Esophagus muscularis mucosa (tissue), 4 donors: ENCODE measurements at regions of chr6 and their contacts with region 1.

Region 1: DNA sequence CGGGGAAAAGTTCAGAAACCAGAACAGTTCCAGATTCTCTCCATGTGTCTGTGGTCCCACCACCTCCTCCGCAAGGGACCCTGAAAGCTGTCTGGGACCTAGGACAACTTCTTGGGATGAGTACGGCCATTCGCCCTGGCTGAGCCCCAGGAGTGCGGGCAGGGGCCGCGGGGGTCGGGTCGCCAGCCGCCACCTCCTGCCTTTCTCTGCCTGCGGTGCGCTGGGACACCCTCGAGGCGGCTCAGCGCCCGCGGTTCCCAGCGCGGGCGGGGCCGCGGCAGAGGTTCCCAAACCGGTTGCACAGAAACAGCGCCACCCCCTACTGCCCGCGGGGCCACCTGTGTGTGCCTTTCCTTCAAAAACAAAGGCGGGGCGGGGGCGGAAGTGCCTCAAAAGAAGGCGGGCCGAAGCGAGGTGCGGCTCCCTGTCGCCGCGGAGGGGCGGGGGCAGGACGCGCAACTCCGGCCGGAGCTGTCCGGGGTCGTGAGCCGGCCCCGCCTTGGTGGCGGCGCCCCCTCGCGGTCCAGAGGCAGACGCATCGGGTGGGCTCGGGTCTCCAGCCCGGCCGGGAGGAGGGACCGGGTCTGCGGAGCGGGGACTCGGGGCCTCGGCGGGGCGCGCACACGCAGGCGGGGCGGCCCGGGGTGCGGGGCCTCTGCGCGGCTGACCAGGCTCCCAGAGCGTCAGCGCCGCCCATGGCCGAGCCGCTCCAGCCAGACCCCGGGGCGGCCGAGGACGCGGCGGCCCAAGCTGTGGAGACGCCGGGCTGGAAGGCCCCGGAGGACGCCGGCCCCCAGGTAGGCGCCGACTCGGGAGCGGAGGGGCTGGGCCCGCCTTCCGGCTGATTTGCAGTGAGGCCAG is at the start of gene HEBP2:
- DNase-seq: peak; percentile 99
- H3K4me3 ChIP-seq: peak within 1 kb of the TSS; percentile 67 to 91 (median 84)
- H3K27ac ChIP-seq: peak within 1 kb of the TSS; percentile 91 to 98 (median 96)
- H3K4me1 ChIP-seq: peaks cover 12 to 33% (median 19%) of the 10 kb centered on the region in 4 donors
- H3K27me3 ChIP-seq: no peaks in the 10 kb centered on the region
- CTCF ChIP-seq: peak; percentile 56 to 63 (median 61)
- EP300 ChIP-seq: no peak
- POLR2A ChIP-seq: no peak
- total RNA-seq, gene HEBP2: 90.1 to 135 (median 104) TPM

Region 2: DNA sequence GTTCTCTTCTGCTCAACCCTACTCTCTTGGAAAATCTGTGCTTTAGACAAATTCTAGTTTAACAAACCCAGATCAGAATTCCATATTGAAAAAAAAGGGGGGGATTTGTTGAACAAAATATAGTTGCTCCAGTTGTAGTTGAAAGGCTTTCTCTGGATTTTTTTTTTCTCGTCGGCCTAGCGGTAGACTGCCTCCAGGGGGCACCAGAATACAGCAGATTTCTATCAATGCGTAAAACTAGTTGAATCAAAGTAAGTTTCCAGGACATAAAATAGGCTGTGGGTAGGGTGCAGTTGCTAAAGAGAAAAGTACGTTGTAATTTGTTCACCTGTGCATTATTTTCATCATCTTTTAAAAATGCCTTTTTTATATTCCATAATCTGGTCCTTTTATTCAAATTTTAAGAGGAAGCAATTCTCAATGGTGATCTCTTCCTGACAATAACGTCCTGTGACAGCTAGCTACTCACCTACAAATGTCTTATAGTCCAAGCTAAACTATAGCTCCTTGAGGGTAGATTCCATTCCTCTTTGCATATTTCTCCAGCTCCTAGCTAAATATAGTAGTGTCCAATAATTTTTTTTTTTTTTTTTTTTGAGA is 402.2 kb before region 1 on chr6:
- intact Hi-C with region 1: loop called (anchors 10 kb)
- DNase-seq: no peak
- H3K4me3 ChIP-seq: no peak overlapping the region
- H3K27ac ChIP-seq: no peak overlapping the region
- H3K4me1 ChIP-seq: peaks cover 0 to 1% (median 0%) of the 10 kb centered on the region in 4 donors
- H3K27me3 ChIP-seq: no peaks in the 10 kb centered on the region
- CTCF ChIP-seq: peak; percentile 86 to 89 (median 87)
- EP300 ChIP-seq: no peak
- POLR2A ChIP-seq: no peak

Region 3: DNA sequence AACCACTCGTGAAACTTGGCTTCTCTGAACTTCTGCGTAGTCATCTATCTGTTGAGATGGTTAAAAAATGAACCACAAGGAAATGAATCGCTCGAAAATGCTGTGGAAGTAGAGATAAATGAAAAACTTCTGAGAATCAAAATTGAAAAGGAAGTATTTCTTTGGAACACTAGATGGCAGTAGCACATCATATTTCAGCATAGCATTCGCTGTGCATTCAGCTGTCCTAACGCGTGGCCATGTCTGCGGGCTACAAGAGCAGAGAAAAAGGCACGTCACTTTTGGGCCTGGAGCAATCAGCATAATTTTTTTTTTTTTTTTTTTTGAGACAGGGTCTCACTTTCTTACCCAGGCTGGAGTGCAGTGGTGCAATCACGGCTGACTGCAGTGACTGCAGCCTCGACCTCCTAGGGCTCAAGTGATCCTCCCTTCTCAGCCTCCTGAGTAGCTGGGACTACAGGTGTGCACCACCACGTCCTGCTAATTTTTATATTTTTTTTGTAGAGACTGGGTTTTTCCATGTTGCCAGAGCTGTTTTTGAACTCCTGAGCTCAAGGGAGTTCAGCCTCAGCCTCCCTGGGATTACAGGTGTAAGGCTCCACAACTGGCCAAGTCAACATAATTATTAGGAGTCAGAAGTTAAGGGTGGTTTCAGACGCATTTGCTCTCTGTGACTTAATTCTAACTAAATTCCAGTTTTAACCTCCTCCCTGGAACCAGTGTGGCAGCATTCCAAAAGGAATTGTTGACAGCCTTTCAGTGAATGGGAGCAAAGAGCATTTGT is 288.0 kb before region 1 on chr6:
- intact Hi-C with region 1: loop called (anchors 5 kb)
- DNase-seq: no peak
- H3K4me3 ChIP-seq: no peak overlapping the region
- H3K27ac ChIP-seq: no peak overlapping the region
- H3K4me1 ChIP-seq: peaks cover 0 to 4% (median 0%) of the 10 kb centered on the region in 4 donors
- H3K27me3 ChIP-seq: peaks cover 0 to 10% (median 0%) of the 10 kb centered on the region in 4 donors
- CTCF ChIP-seq: peak; percentile 63 to 79 (median 70)
- EP300 ChIP-seq: no peak
- POLR2A ChIP-seq: no peak

Region 4: DNA sequence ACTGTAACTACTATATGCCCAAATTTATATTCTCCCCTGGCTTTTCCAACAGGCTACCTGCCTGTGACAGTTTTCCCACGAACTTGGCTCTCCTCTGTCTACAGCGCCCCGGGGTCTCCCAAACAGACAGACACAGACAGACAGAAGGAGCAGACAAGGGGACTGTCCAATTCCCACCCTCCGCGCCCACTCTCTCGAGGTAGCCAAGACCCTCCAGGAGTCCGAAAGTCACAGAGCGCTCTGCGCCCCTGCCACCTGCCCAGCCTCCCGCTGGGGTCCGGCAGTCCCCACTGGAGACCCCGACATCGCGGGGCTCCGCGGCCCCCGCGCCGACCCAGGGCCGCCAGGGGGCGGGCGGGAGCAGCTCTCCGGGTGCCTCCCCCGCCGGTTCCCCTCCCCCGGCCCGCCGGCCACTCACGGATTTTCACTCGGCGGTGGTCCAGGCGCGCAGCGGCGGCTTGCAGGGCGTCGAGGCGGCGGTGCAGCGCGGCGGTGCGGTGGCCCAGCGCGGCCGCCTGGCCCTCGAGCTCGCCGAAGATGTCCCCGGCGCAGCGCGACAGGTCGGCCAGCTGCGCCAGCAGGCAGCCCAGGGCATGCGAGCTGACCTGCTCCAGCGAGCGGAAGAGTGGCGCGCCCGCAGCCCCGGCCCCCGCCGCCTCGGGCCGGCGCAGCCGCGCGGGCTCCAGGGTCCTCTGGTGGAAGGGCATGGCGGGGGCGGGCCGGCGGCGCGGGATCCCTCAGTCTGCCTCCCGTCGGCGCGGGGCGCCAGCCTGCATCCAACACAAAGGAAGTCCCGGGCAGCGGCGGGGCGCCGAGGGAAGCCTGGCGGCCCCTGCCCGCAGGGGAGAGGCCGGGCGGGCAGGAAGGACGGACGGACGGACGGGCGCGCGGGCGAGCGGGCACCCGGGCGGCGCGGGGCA is 288.3 kb after region 1 on chr6:
- intact Hi-C with region 1: loop called (anchors 5 kb)
- DNase-seq: peak; percentile 93
- H3K4me3 ChIP-seq: peak overlapping the region; percentile 82 to 92 (median 88)
- H3K27ac ChIP-seq: peak overlapping the region; percentile 74 to 84 (median 76)
- H3K4me1 ChIP-seq: peaks cover 0 to 17% (median 14%) of the 10 kb centered on the region in 4 donors
- H3K27me3 ChIP-seq: no peaks in the 10 kb centered on the region
- CTCF ChIP-seq: peak; percentile 78 to 92 (median 87)
- EP300 ChIP-seq: no peak
- POLR2A ChIP-seq: no peak